ENCODE measurements at regions of chr17 and their contacts with region 1.

Region 1: DNA sequence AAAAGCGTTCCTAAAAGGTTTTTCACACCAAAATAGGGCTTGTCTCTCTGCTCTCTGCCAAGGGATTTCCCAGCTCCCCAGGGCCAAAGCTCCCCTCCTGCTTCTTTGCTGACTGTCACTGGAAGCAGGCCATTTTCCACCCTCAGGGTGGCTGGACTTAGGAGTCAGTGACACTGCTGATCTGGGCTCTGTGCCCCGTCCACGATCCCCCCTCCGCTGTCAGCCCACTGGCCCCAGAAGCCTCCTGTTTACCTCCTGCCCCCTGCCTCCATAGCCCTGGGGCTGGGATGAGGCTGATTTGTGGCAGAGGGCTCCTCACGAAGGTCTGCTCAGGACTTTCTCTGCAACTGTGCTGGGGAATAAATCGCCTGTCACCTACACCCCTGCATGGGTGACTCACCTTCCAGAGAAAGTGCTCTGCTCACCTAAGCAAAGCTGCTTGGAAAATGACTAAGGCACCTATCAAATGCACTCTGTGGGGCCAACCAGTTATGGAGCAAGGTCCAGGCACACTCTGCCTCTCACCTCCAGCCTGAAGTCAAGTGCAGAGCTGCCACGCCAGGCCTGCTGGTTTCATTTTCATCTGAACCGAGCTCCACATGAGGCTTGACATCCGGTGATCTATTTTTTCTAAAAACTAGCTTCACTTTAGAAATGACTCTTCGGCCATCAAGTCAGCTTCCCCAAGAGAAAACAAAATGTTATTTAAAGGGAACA is 4.9 kb downstream of the MAP3K14 start:
- DNase-seq: peak; percentile 80
- H3K4me3 Mint-ChIP-seq: peak overlapping the region; percentile 99
- H3K27ac Mint-ChIP-seq: peak overlapping the region; percentile 99
- H3K4me1 Mint-ChIP-seq: peaks cover 68% of the 10 kb centered on the region
- H3K27me3 Mint-ChIP-seq: no peaks in the 10 kb centered on the region

Region 2: DNA sequence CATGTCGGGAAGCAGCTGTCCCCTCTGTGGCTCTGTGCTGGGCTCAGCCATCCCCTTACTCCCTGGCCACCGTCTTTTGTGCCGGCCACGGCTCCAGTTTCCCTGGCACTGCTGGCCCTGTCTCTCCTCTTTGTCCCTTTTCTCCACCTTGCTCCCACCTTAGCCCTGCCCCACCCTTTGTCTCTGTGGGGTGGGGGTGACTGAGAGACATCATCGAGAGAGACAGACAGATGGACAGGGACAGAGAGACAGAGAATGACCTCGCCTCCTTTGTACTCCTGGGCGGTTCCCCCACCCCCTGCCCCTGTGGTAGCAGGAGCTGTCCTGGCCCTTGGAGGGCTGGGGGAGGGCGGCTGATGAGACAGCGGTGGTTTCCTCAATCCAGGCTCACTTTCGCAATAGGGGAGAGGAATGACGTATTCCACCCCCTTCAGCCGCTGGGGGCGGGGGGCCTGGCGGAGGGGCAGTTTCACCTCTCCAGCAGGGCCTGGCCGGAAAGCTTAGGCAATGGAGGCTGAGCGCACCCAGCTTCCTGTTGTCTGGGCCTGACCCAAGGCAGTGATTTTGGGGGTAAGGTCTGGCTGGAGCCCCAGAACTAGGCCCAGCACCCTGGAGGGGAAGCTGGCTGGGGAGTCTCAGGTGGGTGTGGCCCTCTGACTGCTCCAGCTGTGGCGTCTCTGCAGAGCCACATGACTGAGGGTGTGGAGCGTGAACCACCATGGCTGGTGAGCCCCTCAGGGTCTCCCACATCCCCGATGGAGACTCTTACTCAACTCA is 83.0 kb before region 1 on chr17:
- intact Hi-C with region 1: loop called (anchors 1 kb)
- DNase-seq: peak; percentile 75
- H3K4me3 Mint-ChIP-seq: peak overlapping the region; percentile 98
- H3K27ac Mint-ChIP-seq: peak overlapping the region; percentile 97
- H3K4me1 Mint-ChIP-seq: peaks cover 80% of the 10 kb centered on the region
- H3K27me3 Mint-ChIP-seq: no peaks in the 10 kb centered on the region

Region 3: DNA sequence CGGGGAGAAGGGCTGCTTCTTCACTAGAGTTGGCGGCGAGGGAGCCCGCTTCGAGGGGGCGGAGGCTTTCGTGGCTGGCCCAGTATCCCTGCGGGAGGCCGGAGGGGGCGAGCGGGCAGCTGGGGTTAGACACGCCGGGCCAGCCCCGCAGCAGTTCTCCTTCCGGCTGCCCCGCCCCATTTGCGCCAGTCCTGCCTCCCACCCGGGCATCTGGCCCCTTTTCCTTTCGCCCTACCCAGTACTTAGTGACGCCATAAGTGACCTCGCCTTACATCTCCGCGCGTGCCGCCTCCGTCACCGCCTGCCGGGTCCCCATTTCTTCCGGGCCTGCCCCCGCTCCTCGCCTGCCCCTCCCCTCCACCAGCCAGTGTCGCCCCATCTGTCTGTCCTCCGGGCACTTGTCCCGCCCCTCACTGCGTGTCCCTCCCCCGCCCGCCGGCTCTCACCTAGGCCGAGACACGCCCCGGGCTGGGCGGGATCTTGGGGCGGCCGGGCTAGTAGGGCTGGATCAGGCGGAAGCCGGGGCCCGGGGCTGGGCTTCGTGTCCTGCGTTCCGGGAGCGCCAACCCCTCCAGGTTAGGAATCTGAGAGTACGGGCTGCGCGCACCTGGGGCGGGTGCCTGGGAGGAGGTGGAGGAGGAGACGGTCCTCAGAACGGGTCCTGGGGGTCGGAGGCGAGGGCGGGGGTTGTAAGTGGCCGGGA is 64.3 kb before region 1 on chr17:
- intact Hi-C with region 1: loop called (anchors 2 kb)
- DNase-seq: peak; percentile 95
- H3K4me3 Mint-ChIP-seq: peak overlapping the region; percentile 91
- H3K27ac Mint-ChIP-seq: peak overlapping the region; percentile 91
- H3K4me1 Mint-ChIP-seq: peaks cover 53% of the 10 kb centered on the region
- H3K27me3 Mint-ChIP-seq: no peaks in the 10 kb centered on the region

Region 4: DNA sequence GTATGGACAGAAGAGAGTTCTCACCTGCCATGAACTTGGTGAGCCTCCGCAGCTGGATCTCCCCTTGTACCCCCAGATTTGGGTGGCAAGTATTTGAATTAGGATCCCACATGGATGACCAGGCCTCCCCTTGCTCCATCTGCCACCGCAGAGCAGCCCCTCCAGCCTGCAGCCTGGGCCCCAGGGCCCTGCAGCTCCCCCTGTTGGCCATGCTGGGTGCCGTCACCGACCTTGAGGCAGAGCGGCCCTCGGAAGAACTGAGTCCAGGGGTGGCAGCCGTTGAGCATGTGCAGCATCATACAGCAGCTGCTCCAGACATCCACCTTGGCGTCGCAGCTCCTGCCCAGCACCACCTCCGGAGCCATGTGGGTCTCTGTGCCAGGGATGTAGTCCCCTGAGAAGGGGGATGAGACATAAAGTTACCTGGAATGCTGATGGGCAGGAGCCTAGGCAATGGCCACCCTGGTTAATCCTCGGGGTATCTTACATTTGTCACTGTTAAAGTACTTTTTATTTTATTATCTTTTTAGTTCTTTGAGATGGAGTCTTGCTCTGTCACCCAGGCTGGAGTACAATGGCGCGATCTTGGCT is 41.0 kb before region 1 on chr17:
- intact Hi-C with region 1: loop called (anchors 2 kb)
- DNase-seq: peak; percentile 33
- H3K4me3 Mint-ChIP-seq: no peak overlapping the region
- H3K27ac Mint-ChIP-seq: peak overlapping the region; percentile 70
- H3K4me1 Mint-ChIP-seq: peaks cover 14% of the 10 kb centered on the region
- H3K27me3 Mint-ChIP-seq: no peaks in the 10 kb centered on the region

Region 5: GRCh38 chr17:45385331-45385997 is 73.5 kb after region 1 on chr17:
- intact Hi-C with region 1: loop called (anchors 2 kb)
- DNase-seq: peak; percentile 79
- H3K4me3 Mint-ChIP-seq: no peak overlapping the region
- H3K27ac Mint-ChIP-seq: peak overlapping the region; percentile 69
- H3K4me1 Mint-ChIP-seq: peaks cover 22% of the 10 kb centered on the region
- H3K27me3 Mint-ChIP-seq: peaks cover 2% of the 10 kb centered on the region

Measured in activated T-helper 2 cell treated with anti-CD3 and anti-CD28 coated beads, Interferon-gamma antibody, Interleukin-2, Interleukin-4, amounts not matched to agents 10 μg/mL and 5 μg/mL and 100 μg/mL, durations not matched to agents 14 hours and 24 hours and 36 hours (primary cell).